Esophagus muscularis mucosa (tissue), 4 donors: ENCODE measurements at regions of chr10 and their contacts with region 1.

Region 1: GRCh38 chr10:30783939-30784500 is 154.5 kb upstream of the LYZL2 start:
- DNase-seq: peak; percentile 94
- H3K4me3 ChIP-seq: peak overlapping the region; percentile 73 to 86 (median 78)
- H3K27ac ChIP-seq: peak overlapping the region; percentile 85 to 96 (median 92)
- H3K4me1 ChIP-seq: peaks cover 13 to 32% (median 25%) of the 10 kb centered on the region in 4 donors
- H3K27me3 ChIP-seq: no peaks in the 10 kb centered on the region
- CTCF ChIP-seq: peak; percentile 88 to 90 (median 89)
- EP300 ChIP-seq: no peak
- POLR2A ChIP-seq: no peak

Region 2: GRCh38 chr10:30751678-30752331 is 32.2 kb before region 1 on chr10:
- intact Hi-C with region 1: no loop called
- DNase-seq: no peak
- H3K4me3 ChIP-seq: no peak overlapping the region
- H3K27ac ChIP-seq: peak overlapping the region in 2 of 4 donors; percentile 27 to 44
- H3K4me1 ChIP-seq: peaks cover 0 to 22% (median 9%) of the 10 kb centered on the region in 4 donors
- H3K27me3 ChIP-seq: no peaks in the 10 kb centered on the region
- CTCF ChIP-seq: peak; percentile 28 to 95 (median 29)
- EP300 ChIP-seq: no peak
- POLR2A ChIP-seq: no peak

Region 3: GRCh38 chr10:31031558-31032257 is 247.7 kb after region 1 on chr10 and contains the start of gene ZNF438:
- intact Hi-C with region 1: loop called (anchors 5 kb)
- DNase-seq: peak; percentile 98
- H3K4me3 ChIP-seq: peak within 1 kb of the TSS; percentile 63 to 74 (median 72)
- H3K27ac ChIP-seq: peak within 1 kb of the TSS; percentile 97 to 100 (median 98)
- H3K4me1 ChIP-seq: peaks cover 22 to 50% (median 47%) of the 10 kb centered on the region in 4 donors
- H3K27me3 ChIP-seq: no peaks in the 10 kb centered on the region
- CTCF ChIP-seq: peak; percentile 47 to 61 (median 61)
- EP300 ChIP-seq: no peak
- POLR2A ChIP-seq: peak; percentile 88
- total RNA-seq, gene ZNF438: 11.0 to 11.6 (median 11.3) TPM

Region 4: DNA sequence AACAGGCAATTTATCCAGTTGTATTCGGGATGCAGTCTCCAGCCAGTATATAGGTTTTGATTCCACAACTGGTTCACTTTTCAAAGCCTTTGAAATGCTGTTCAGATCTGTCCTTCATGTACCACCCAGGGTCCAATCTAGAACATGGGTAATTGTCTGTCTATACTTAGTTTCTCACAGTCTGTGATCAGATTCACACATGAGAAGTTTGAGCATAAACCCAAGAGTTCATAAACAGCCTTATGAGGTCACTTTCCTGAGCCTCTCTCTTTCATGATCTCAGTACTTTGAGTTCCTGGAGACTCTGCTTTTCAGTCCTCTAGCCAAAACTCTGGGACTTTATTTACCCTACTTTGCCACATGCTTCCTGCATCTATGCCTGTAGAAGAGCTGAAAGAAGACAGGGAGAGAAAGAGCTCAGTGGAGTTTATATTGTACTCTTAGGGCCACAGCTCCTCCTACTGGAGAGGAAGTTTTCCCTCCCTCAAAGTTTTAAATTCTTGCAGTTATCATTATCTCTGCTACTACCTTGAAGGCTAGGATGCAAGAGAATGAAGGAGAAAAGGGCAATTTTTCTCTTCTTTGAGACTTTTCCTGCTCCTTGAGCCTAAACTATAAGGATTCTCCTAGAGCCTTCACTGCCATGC is 707.0 kb after region 1 on chr10:
- intact Hi-C with region 1: loop called (anchors 5 kb)
- DNase-seq: no peak
- H3K4me3 ChIP-seq: no peak overlapping the region
- H3K27ac ChIP-seq: no peak overlapping the region
- H3K4me1 ChIP-seq: peaks cover 0 to 8% (median 0%) of the 10 kb centered on the region in 4 donors
- H3K27me3 ChIP-seq: no peaks in the 10 kb centered on the region
- CTCF ChIP-seq: peak; percentile 49 to 65 (median 64)
- EP300 ChIP-seq: no peak
- POLR2A ChIP-seq: no peak

Region 5: GRCh38 chr10:31770307-31770902 is 986.4 kb after region 1 on chr10:
- intact Hi-C with region 1: loop called (anchors 2 kb)
- DNase-seq: peak; percentile 87
- H3K4me3 ChIP-seq: no peak overlapping the region
- H3K27ac ChIP-seq: no peak overlapping the region
- H3K4me1 ChIP-seq: no peaks in the 10 kb centered on the region
- H3K27me3 ChIP-seq: no peaks in the 10 kb centered on the region
- CTCF ChIP-seq: peak; percentile 76 to 85 (median 84)
- EP300 ChIP-seq: no peak
- POLR2A ChIP-seq: no peak

Region 6: DNA sequence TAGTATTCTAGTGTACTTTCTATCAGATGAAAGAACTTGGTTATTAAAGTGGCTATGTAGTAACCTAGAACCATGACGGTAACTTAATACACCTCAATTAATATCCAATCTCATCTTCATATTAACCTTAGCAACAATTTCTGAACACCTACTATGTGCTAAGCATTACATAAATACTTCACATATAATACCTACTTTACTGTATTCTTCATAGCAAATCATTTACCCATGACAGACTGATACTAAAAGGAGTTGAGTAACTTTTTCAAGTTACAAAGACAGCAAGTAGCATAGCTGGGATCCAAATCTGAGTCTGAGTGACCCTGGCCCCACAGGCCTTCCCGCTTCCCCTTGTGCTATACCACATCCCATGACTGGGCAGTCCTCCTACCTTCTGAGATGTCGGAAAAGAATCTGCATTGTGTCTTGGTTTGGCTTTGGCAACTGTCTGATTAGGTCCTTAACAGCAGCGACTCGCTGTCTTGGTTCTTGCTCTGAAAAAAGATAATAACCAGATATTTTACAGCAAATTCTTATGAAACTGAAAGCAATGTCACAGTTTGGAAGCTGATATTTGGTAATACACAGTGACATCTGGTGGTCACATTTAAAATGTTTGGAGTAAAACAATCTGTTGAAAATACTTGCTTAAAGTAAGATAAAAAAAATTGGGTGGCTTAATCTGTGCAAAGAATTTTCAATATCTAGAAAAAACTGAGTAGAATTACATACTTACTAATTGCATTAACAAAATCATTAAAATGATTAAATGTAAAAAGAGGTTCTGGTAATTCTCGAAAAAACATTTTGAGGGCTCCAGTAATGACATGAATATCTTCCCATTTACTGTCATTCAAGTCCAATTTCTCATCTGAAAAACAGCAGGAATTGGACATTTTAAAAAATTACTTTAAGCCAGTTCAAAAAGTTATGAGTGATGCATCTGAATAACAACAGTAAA is 1024.5 kb after region 1 on chr10:
- intact Hi-C with region 1: loop called (anchors 2 kb)
- DNase-seq: no peak
- H3K4me3 ChIP-seq: peak overlapping the region; percentile 35 to 54 (median 42)
- H3K27ac ChIP-seq: peak overlapping the region; percentile 60 to 74 (median 66)
- H3K4me1 ChIP-seq: peaks cover 0 to 9% (median 3%) of the 10 kb centered on the region in 4 donors
- H3K27me3 ChIP-seq: no peaks in the 10 kb centered on the region
- CTCF ChIP-seq: peak; percentile 59 to 71 (median 64)
- EP300 ChIP-seq: no peak
- POLR2A ChIP-seq: no peak